ENCODE measurements at regions of chr5 and their contacts with region 1.

Region 1: GRCh38 chr5:892394-893136 is at the starts of genes BRD9 and TRIP13:
- DNase-seq: peak; percentile 52 to 68
- ATAC-seq: peak; percentile 92 to 95
- H3K4me3 ChIP-seq: peak within 1 kb of the TSS; percentile 73 to 88 (median 78)
- H3K27ac ChIP-seq: peak within 1 kb of the TSS; percentile 83 to 96 (median 92)
- H3K4me1 ChIP-seq: peaks cover 15 to 16% of the 10 kb centered on the region in 2 donors
- H3K27me3 ChIP-seq: no peaks in the 10 kb centered on the region
- CTCF ChIP-seq: no peak
- POLR2A ChIP-seq: peak in 1 of 2 donors; percentile 57
- total RNA-seq, gene BRD9: 20.3 to 28.8 (median 22.2) TPM
- total RNA-seq, gene TRIP13: 0.41 to 1.6 (median 0.50) TPM

Region 2: DNA sequence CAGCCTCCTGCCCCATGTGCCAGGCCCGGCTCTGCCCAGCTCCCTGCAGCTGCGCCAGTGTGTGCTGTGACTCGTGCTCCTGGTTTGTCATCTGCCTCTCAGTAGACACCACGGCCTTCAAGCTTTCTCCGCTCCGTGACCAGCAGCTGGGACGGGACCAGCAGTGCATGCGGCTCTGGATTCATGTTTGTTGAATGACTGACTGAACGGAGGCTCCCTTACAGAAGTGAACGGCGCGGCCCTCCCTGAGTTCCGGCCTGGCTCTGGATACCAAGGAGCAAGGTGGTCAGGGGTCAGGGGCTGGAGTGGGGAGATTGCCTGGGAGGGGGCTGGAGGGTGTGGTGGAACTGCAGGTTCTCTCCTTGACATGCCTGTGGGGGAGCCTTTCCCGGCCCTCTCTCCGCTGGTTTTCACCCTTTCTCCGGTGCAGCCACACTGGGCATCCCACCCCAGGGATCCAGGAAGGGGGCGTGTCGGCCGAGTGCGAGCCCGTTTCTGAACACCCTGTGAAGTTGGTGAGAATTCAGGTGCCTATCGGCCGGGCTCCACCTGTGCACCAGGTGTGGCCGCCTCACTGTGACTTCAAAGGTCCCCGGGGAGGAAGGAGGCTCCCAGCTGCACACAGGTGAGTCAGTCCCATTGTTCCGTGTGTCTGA is 291.6 kb before region 1 on chr5:
- in situ Hi-C with region 1: no loop called
- intact Hi-C with region 1: no loop called
- DNase-seq: no peak
- ATAC-seq: no peak
- H3K4me3 ChIP-seq: no peak overlapping the region
- H3K27ac ChIP-seq: no peak overlapping the region
- H3K4me1 ChIP-seq: no peaks in the 10 kb centered on the region
- H3K27me3 ChIP-seq: peaks cover 7 to 18% (median 17%) of the 10 kb centered on the region in 3 donors
- CTCF ChIP-seq: no peak
- POLR2A ChIP-seq: no peak

Region 3: GRCh38 chr5:611721-612486 is 280.7 kb before region 1 on chr5 and contains the start of gene CEP72:
- in situ Hi-C with region 1: no loop called
- intact Hi-C with region 1: loop called (anchors 1 kb)
- DNase-seq: peak; percentile 78 to 82
- ATAC-seq: peak; percentile 95 to 96
- H3K4me3 ChIP-seq: peak within 1 kb of the TSS; percentile 70 to 78 (median 74)
- H3K27ac ChIP-seq: peak within 1 kb of the TSS in 2 of 4 donors; percentile 28 to 41
- H3K4me1 ChIP-seq: peaks cover 6 to 13% of the 10 kb centered on the region in 2 donors
- H3K27me3 ChIP-seq: peaks cover 0 to 2% (median 0%) of the 10 kb centered on the region in 3 donors
- CTCF ChIP-seq: no peak
- POLR2A ChIP-seq: no peak
- total RNA-seq, gene CEP72: 0.36 to 0.56 (median 0.40) TPM in 3 of 4 donors, not detected in the other

Region 4: DNA sequence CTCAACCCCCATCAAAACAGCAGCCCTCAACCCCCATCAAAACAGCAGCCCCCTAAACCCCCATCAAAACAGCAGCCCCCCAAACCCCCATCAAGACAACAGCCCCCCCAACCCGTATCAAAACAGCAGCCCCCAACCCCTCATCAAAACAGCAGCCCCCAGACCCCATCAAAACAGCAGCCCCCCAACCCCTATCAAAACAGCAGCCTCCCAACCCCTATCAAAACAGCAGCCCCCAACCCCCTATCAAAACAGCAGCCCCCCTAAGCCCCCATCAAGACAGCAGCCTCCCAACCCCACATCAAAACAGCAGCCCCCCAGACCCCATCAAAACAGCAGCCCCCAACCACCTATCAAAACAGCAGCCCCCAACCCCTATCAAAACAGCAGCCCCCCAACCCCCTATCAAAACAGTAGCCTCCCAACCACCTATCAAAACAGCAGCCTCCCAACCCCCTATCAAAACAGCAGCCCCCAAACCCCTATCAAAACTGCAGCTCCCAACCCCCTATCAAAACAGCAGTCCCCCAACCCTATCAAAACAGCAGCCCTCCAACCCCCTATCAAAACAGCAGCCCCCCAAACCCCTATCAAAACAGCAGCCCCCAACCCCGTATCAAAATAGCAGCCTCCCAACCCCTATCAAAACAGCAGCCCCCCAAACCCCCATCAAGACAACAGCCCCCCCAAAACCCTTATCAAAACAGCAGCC is 200.6 kb before region 1 on chr5:
- in situ Hi-C with region 1: no loop called
- intact Hi-C with region 1: loop called (anchors 5 kb)
- DNase-seq: no peak
- ATAC-seq: no peak
- H3K4me3 ChIP-seq: peak overlapping the region; percentile 58 to 71 (median 64)
- H3K27ac ChIP-seq: peak overlapping the region; percentile 63 to 81 (median 78)
- H3K4me1 ChIP-seq: peaks cover 0 to 9% of the 10 kb centered on the region in 2 donors
- H3K27me3 ChIP-seq: no peaks in the 10 kb centered on the region
- CTCF ChIP-seq: no peak
- POLR2A ChIP-seq: no peak

Region 5: GRCh38 chr5:1709171-1709803 is 816.7 kb after region 1 on chr5:
- in situ Hi-C with region 1: no loop called
- intact Hi-C with region 1: no loop called
- DNase-seq: no peak
- ATAC-seq: no peak
- H3K4me3 ChIP-seq: no peak overlapping the region
- H3K27ac ChIP-seq: no peak overlapping the region
- H3K4me1 ChIP-seq: no peaks in the 10 kb centered on the region
- H3K27me3 ChIP-seq: peaks cover 4 to 13% (median 10%) of the 10 kb centered on the region in 3 donors
- CTCF ChIP-seq: no peak
- POLR2A ChIP-seq: no peak

Measured in gastrocnemius medialis (tissue), 4 donors.